MCF 10A (cell line): ENCODE measurements at regions of chr17 and their contacts with region 1.

Region 1: GRCh38 chr17:50541716-50542688 is 5.0 kb upstream of the SPATA20 start:
- DNase-seq: peak; percentile 85
- H3K4me3 Mint-ChIP-seq: peak overlapping the region; percentile 70
- H3K27ac Mint-ChIP-seq: no peak overlapping the region
- H3K4me1 Mint-ChIP-seq: peaks cover 41% of the 10 kb centered on the region
- H3K27me3 Mint-ChIP-seq: no peaks in the 10 kb centered on the region
- CTCF ChIP-seq: peak; percentile 9

Region 2: GRCh38 chr17:50452610-50453300 is 89.2 kb before region 1 on chr17:
- CTCF ChIA-PET with region 1: no interaction called
- POLR2A ChIA-PET with region 1: no interaction called
- intact Hi-C with region 1: no loop called
- DNase-seq: peak; percentile 76
- H3K4me3 Mint-ChIP-seq: peak overlapping the region; percentile 19
- H3K27ac Mint-ChIP-seq: peak overlapping the region; percentile 9
- H3K4me1 Mint-ChIP-seq: peaks cover 14% of the 10 kb centered on the region
- H3K27me3 Mint-ChIP-seq: no peaks in the 10 kb centered on the region
- CTCF ChIP-seq: no peak

Region 3: GRCh38 chr17:50514946-50515702 is 26.9 kb before region 1 on chr17:
- CTCF ChIA-PET with region 1: interaction called, 3 read pairs
- POLR2A ChIA-PET with region 1: interaction called, 14 read pairs
- intact Hi-C with region 1: no loop called
- DNase-seq: peak; percentile 85
- H3K4me3 Mint-ChIP-seq: no peak overlapping the region
- H3K27ac Mint-ChIP-seq: peak overlapping the region; percentile 11
- H3K4me1 Mint-ChIP-seq: peaks cover 45% of the 10 kb centered on the region
- H3K27me3 Mint-ChIP-seq: no peaks in the 10 kb centered on the region
- CTCF ChIP-seq: no peak